ENCODE measurements at regions of chr12 and their contacts with region 1.

Region 1: GRCh38 chr12:14473707-14474287 is 93.9 kb downstream of the PLBD1 start:
- DNase-seq: peak in 1 of 9 experiments; percentile 32
- ATAC-seq: no peak
- H3K4me3 ChIP-seq: no peak overlapping the region
- H3K4me3 Mint-ChIP-seq: no peak overlapping the region
- H3K27ac ChIP-seq: no peak overlapping the region
- H3K27ac Mint-ChIP-seq: no peak overlapping the region
- H3K4me1 ChIP-seq: no peaks in the 10 kb centered on the region
- H3K4me1 Mint-ChIP-seq: peaks cover 6% of the 10 kb centered on the region
- H3K27me3 ChIP-seq: no peaks in the 10 kb centered on the region
- H3K27me3 Mint-ChIP-seq: no peaks in the 10 kb centered on the region
- CTCF ChIP-seq: no peak

Region 2: DNA sequence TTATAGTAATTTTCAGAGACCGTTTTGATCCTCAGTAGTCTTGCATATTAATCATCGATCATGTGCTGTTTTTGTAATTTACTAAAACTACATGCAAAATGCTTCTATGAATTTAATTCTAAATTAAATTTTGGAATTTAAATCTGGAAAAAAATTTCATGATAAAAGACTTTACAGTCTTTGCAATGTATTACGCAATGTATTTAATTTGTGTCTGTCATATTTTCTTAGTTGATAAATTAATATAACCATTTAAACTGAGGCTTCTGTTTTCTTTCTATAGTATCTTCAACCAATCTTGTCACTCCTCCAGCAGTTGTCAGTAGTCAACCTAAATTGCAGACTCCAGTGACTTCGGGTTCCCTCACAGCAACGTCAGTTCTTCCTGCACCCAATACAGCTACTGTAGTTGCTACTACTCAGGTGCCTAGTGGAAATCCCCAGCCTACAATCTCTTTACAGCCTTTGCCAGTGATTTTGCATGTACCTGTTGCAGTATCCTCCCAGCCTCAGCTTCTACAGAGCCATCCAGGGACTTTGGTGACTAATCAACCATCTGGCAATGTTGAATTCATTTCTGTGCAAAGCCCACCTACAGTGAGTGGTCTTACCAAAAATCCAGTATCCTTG is 13.5 kb before region 1 on chr12:
- CTCF ChIA-PET with region 1: no interaction called
- POLR2A ChIA-PET with region 1: interaction called, 3 read pairs
- intact Hi-C with region 1: loop called in 1 of 2 experiments (anchors 2 kb)
- DNase-seq: peak in 1 of 9 experiments; percentile 29
- ATAC-seq: peak; percentile 36
- H3K4me3 ChIP-seq: no peak overlapping the region
- H3K4me3 Mint-ChIP-seq: no peak overlapping the region
- H3K27ac ChIP-seq: no peak overlapping the region
- H3K27ac Mint-ChIP-seq: peak overlapping the region; percentile 37
- H3K4me1 ChIP-seq: peaks cover 7% of the 10 kb centered on the region
- H3K4me1 Mint-ChIP-seq: peaks cover 41% of the 10 kb centered on the region
- H3K27me3 ChIP-seq: no peaks in the 10 kb centered on the region
- H3K27me3 Mint-ChIP-seq: no peaks in the 10 kb centered on the region
- CTCF ChIP-seq: no peak

Region 3: GRCh38 chr12:14505626-14506596 is 32.1 kb after region 1 on chr12:
- CTCF ChIA-PET with region 1: no interaction called
- POLR2A ChIA-PET with region 1: no interaction called
- intact Hi-C with region 1: loop called in 1 of 2 experiments (anchors 5 kb)
- DNase-seq: no peak
- ATAC-seq: no peak
- H3K4me3 ChIP-seq: no peak overlapping the region
- H3K4me3 Mint-ChIP-seq: no peak overlapping the region
- H3K27ac ChIP-seq: no peak overlapping the region
- H3K27ac Mint-ChIP-seq: peak overlapping the region; percentile 38
- H3K4me1 ChIP-seq: no peaks in the 10 kb centered on the region
- H3K4me1 Mint-ChIP-seq: peaks cover 2% of the 10 kb centered on the region
- H3K27me3 ChIP-seq: no peaks in the 10 kb centered on the region
- H3K27me3 Mint-ChIP-seq: no peaks in the 10 kb centered on the region
- CTCF ChIP-seq: no peak